ENCODE measurements at regions of chr11 and their contacts with region 1.

Region 1: DNA sequence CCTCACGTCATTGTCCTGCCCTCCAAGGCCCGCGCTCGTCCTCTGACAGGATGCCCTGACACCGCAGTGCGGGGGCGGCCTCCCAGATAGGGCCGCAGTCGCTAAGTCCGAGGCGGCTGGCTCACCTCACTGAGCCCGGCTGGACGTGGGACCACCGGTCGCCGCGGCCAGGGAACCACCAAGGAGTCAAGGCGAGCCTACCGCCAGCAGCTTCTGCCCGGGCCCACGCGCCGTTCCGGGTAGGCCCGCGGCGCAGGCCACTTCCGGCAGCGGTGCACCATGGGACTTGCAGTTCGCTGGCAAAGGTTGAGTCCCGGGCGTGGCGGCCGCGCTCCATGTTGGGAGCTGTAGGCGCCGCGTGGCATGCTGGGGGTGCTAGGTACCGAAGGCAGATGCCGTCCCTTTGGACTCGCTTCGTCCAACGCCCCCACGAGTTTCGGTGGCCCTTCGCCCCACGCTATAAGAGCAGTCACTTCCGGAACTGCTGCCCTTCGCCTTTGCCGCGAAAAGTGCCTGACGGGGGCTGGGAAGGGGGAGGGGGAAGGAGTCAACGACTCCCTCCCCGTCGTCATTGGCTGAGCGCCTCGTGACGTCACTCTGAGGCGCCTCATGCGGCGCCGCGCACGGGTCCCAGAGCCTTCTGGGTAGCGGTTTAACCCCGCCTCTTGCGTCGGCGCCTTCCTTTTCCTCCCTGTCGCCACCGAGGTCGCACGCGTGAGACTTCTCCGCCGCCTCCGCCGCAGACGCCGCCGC is at the start of gene RPLP2:
- DNase-seq: peak; percentile 97
- H3K4me3 ChIP-seq: peak within 1 kb of the TSS; percentile 86 to 94 (median 91)
- H3K27ac ChIP-seq: peak within 1 kb of the TSS; percentile 93
- H3K4me1 ChIP-seq: peaks cover 22% of the 10 kb centered on the region
- H3K27me3 ChIP-seq: no peaks in the 10 kb centered on the region
- CTCF ChIP-seq: no peak
- total RNA-seq, gene RPLP2: 135 to 1,487 TPM

Region 2: GRCh38 chr11:506238-506994 is 303.0 kb before region 1 on chr11:
- CTCF ChIA-PET with region 1: no interaction called
- dilution Hi-C with region 1: loop called (anchors 10 kb)
- in situ Hi-C with region 1: no loop called
- intact Hi-C with region 1: no loop called
- DNase-seq: peak; percentile 96
- H3K4me3 ChIP-seq: peak overlapping the region; percentile 84 to 96 (median 92)
- H3K27ac ChIP-seq: peak overlapping the region; percentile 97
- H3K4me1 ChIP-seq: peaks cover 35% of the 10 kb centered on the region
- H3K27me3 ChIP-seq: no peaks in the 10 kb centered on the region
- CTCF ChIP-seq: no peak

Region 3: GRCh38 chr11:798093-798713 is 11.3 kb before region 1 on chr11 and contains the start of gene SLC25A22:
- CTCF ChIA-PET with region 1: no interaction called
- dilution Hi-C with region 1: no loop called
- in situ Hi-C with region 1: no loop called
- intact Hi-C with region 1: loop called (anchors 1 kb)
- DNase-seq: peak; percentile 80
- H3K4me3 ChIP-seq: peak within 1 kb of the TSS; percentile 55 to 93 (median 88)
- H3K27ac ChIP-seq: peak within 1 kb of the TSS; percentile 9
- H3K4me1 ChIP-seq: peaks cover 23% of the 10 kb centered on the region
- H3K27me3 ChIP-seq: no peaks in the 10 kb centered on the region
- CTCF ChIP-seq: peak; percentile 42 to 67
- total RNA-seq, gene SLC25A22: 7.3 to 29.5 TPM

Region 4: DNA sequence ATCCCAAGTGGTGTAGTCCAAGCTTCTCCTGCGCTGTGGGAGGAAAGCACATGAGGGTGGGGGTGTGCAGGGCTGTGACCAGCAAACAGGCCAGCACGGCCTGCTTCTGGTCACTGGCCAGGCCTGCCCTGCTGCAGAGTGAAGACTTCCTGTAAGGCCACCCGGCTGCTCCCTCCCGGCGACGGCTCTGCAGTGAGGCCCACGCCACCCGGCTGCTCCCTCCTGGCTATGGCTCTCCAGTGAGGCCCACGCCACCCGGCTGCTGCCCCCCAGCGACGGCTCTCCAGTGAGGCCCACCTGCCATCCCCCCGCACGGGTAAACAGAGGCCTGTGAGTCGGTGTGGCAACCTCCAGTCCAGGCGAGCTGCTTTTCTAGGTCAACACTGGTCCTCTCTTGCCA is 548.8 kb after region 1 on chr11:
- CTCF ChIA-PET with region 1: no interaction called
- dilution Hi-C with region 1: no loop called
- in situ Hi-C with region 1: no loop called
- intact Hi-C with region 1: no loop called
- DNase-seq: no peak
- H3K4me3 ChIP-seq: no peak overlapping the region
- H3K27ac ChIP-seq: no peak overlapping the region
- H3K4me1 ChIP-seq: no peaks in the 10 kb centered on the region
- H3K27me3 ChIP-seq: no peaks in the 10 kb centered on the region
- CTCF ChIP-seq: no peak

Measured in mammary epithelial cell (primary cell).